CD4-positive, alpha-beta memory T cell (primary cell): ENCODE measurements at regions of chr13 and their contacts with region 1.

Region 1: GRCh38 chr13:30802953-30803478 is 67.7 kb downstream of the ALOX5AP start:
- DNase-seq: peak; percentile 71 to 78 (median 74)
- H3K4me3 ChIP-seq: no peak overlapping the region
- H3K4me3 Mint-ChIP-seq: peak overlapping the region; percentile 32 to 76 (median 62)
- H3K27ac ChIP-seq: no peak overlapping the region
- H3K27ac Mint-ChIP-seq: peak overlapping the region in 4 of 7 donors; percentile 46 to 70 (median 62)
- H3K4me1 ChIP-seq: peaks cover 9% of the 10 kb centered on the region
- H3K4me1 Mint-ChIP-seq: peaks cover 7 to 21% (median 8%) of the 10 kb centered on the region in 4 donors
- H3K27me3 ChIP-seq: no peaks in the 10 kb centered on the region
- H3K27me3 Mint-ChIP-seq: no peaks in the 10 kb centered on the region

Region 2: GRCh38 chr13:30551189-30551588 is 251.8 kb before region 1 on chr13:
- CTCF ChIA-PET with region 1: interaction called, 3 read pairs
- POLR2A ChIA-PET with region 1: no interaction called
- intact Hi-C with region 1: loop called (anchors 1 kb)
- DNase-seq: peak in 4 of 5 donors; percentile 19 to 21 (median 20)
- H3K4me3 ChIP-seq: no peak overlapping the region
- H3K4me3 Mint-ChIP-seq: no peak overlapping the region
- H3K27ac ChIP-seq: no peak overlapping the region
- H3K27ac Mint-ChIP-seq: no peak overlapping the region
- H3K4me1 ChIP-seq: no peaks in the 10 kb centered on the region
- H3K4me1 Mint-ChIP-seq: peaks cover 0 to 3% (median under 1%) of the 10 kb centered on the region in 4 donors
- H3K27me3 ChIP-seq: no peaks in the 10 kb centered on the region
- H3K27me3 Mint-ChIP-seq: no peaks in the 10 kb centered on the region

Region 3: GRCh38 chr13:30572859-30573275 is 230.1 kb before region 1 on chr13:
- CTCF ChIA-PET with region 1: interaction called, 6 read pairs
- POLR2A ChIA-PET with region 1: no interaction called
- intact Hi-C with region 1: loop called (anchors 5 kb)
- DNase-seq: peak; percentile 33 to 53 (median 43)
- H3K4me3 ChIP-seq: peak overlapping the region; percentile 37 to 64
- H3K4me3 Mint-ChIP-seq: peak overlapping the region; percentile 67 to 88 (median 79)
- H3K27ac ChIP-seq: peak overlapping the region; percentile 62
- H3K27ac Mint-ChIP-seq: peak overlapping the region; percentile 56 to 94 (median 91)
- H3K4me1 ChIP-seq: peaks cover 36% of the 10 kb centered on the region
- H3K4me1 Mint-ChIP-seq: peaks cover 28 to 47% (median 33%) of the 10 kb centered on the region in 4 donors
- H3K27me3 ChIP-seq: no peaks in the 10 kb centered on the region
- H3K27me3 Mint-ChIP-seq: no peaks in the 10 kb centered on the region

Region 4: DNA sequence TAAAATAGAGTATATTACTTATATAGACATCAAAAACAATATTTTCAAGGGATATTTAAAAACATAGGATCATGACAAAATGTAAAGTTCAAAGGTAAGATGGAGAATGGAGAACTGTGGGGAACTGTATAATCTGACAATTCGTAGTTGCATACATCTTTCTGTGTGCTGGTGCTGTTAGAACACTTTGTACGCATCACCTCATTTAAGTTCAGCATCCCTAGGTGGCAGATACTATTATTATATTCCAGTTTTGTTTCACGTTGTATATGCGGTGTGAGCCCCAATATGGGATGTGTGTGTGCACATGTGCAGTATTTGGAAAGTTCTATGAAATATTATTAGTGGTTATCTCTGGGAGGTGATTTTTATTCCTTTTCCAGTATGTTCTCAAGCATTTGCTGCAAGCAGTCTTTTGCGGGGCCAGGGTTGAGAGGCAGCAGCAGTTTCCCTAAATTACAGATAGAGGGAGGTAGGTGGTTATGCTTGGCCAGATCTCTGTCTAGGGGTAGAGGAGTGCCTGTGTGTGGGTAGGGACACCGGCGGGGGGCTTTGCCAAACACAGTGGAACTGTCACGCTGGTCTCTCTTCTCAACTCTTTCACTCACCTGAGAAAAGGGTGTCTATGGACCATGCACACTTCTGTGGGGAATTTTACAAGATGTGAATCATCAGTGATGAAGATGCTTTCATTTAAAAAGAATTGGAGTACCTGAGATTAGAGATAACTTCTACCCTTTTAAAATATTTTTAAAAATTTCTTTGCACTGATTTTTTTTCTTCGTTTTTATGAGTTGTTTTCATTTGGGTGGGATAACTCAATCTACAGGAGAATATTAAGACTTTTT is 123.3 kb before region 1 on chr13:
- CTCF ChIA-PET with region 1: interaction called, 29 read pairs
- POLR2A ChIA-PET with region 1: no interaction called
- intact Hi-C with region 1: loop called (anchors 1 kb)
- DNase-seq: peak; percentile 42 to 52 (median 47)
- H3K4me3 ChIP-seq: no peak overlapping the region
- H3K4me3 Mint-ChIP-seq: peak overlapping the region in 1 of 8 donors; percentile 30
- H3K27ac ChIP-seq: no peak overlapping the region
- H3K27ac Mint-ChIP-seq: peak overlapping the region in 6 of 7 donors; percentile 3 to 46 (median 16)
- H3K4me1 ChIP-seq: no peaks in the 10 kb centered on the region
- H3K4me1 Mint-ChIP-seq: peaks cover 8 to 11% (median 11%) of the 10 kb centered on the region in 4 donors
- H3K27me3 ChIP-seq: no peaks in the 10 kb centered on the region
- H3K27me3 Mint-ChIP-seq: no peaks in the 10 kb centered on the region